Posterior cingulate gyrus (tissue), 11 donors: ENCODE measurements at regions of chr5 and their contacts with region 1.

Region 1: DNA sequence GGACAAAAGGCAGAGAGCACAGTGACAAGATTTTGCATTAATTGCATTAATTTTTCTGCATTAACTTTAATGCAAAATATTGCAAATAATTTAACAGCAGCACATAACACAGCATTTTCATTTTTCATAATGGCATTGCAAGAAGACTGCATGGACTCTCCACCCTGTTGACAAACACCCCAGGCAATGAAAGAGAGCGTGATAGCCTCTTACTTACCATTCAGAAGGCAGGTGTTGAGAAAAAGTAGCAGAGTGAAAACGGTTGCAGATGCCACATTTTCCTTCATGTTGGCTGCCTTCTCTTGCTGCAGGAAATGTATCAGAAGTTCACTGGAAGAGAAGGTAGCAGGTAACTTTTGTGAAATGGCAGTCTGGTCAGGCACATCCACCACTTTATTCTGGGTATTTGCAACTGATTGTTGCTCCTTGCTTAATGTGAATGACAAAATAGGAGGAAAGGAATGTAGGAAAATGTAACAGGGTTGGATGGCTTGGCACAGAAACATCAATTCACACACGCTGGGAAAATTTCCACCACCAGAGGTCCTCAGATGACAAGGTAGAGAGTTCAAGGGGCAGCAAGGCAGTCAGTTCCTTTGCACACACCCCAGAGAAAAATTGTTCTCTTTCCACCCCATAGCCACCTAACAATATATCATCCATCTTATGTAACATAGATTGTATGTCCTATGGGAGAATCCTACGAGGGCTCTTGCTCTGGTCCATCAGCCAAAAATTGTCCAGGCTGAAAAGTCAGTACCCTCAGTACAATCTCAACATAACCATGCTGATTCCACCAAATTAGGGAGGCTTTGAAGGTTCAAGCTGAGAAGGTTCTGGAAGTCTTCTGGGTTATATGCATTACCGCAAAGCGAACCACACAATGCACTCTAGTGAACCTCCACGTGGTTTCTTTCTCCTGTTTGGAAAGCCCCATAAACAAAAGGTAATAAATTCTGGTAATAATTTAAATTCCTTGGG is 41.9 kb upstream of the AGXT2 start:
- DNase-seq: peak in 6 of 10 donors; percentile 17 to 90 (median 58)

Region 2: DNA sequence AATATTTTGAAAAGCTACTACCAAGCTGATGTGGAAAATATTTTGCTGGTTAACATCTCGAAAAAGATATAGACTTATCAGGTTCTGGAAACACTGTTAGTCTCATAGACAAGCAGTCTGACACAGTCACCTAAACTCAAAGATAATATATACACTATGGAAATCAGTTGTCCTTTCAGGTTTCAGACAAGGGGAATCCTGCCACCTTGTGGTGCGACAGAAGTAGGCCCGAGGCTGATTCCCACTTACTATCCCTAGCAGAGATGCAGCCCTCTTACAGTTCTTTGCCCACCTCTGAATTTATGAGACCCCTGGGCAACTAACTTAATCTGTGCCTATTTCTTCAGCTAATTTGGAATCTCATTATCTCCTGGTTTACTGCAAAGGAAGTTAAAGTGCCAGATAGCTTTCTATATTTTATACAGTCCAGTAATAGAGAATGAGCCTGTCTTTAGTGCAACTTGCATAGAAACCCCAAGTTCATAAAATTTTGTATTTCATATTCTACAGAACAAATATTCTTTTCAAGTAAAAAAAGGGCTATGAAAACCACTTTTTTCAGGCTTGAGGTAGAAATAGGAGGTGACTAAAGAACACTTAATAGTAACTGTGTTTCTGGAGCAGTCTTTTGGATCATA is 191.2 kb before region 1 on chr5:
- intact Hi-C with region 1: no loop called
- DNase-seq: peak; percentile 42 to 95 (median 77)

Region 3: GRCh38 chr5:35182541-35183535 is 93.2 kb after region 1 on chr5:
- intact Hi-C with region 1: loop called (anchors 5 kb)
- DNase-seq: peak in 4 of 10 donors; percentile 26 to 82 (median 38)

Region 4: GRCh38 chr5:35679357-35679756 is 589.7 kb after region 1 on chr5:
- intact Hi-C with region 1: no loop called
- DNase-seq: no peak